ENCODE measurements at regions of chr6 and their contacts with region 1.

Region 1: GRCh38 chr6:13941902-13942301 is 17.1 kb downstream of the RNF182 start:
- DNase-seq: no peak
- ATAC-seq: no peak
- H3K4me3 Mint-ChIP-seq: no peak overlapping the region
- H3K27ac Mint-ChIP-seq: no peak overlapping the region
- H3K4me1 Mint-ChIP-seq: no peaks in the 10 kb centered on the region
- H3K27me3 Mint-ChIP-seq: peaks cover 15% of the 10 kb centered on the region
- CTCF ChIP-seq: no peak

Region 2: DNA sequence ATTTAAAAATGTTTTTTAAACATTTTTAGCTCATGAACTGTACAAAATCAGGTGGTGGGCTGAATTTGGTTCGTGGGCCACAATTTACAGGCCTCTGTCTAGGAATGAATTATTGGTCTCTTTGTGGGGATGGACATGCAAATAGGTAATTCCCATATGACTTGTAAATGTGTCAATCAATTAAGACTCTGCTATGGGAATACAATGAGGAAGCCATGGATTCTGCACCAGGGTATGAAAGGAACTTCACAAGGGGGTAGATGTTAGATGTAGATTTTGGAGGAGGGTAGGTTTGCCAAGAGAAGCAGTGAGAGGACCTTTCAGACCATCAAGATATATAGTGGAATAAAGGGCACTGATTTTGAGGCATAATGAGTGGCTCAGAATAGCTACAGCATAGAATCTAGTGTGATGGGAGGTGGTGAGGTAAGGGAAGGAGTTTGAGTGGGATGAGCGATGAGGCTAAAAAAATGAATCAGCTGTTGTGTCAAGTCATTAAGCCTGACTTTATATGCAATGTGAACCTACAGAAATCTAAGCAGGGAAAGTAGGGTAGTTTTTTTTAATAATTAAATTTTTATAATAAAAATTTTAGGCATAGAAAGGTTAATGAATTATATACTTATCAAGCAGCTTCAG is 49.8 kb before region 1 on chr6:
- CTCF ChIA-PET with region 1: no interaction called
- POLR2A ChIA-PET with region 1: no interaction called
- intact Hi-C with region 1: loop called (anchors 2 kb)
- DNase-seq: no peak
- ATAC-seq: no peak
- H3K4me3 Mint-ChIP-seq: no peak overlapping the region
- H3K27ac Mint-ChIP-seq: no peak overlapping the region
- H3K4me1 Mint-ChIP-seq: no peaks in the 10 kb centered on the region
- H3K27me3 Mint-ChIP-seq: peaks cover 7% of the 10 kb centered on the region
- CTCF ChIP-seq: no peak